ENCODE measurements at regions of chr1 and their contacts with region 1.

Region 1: DNA sequence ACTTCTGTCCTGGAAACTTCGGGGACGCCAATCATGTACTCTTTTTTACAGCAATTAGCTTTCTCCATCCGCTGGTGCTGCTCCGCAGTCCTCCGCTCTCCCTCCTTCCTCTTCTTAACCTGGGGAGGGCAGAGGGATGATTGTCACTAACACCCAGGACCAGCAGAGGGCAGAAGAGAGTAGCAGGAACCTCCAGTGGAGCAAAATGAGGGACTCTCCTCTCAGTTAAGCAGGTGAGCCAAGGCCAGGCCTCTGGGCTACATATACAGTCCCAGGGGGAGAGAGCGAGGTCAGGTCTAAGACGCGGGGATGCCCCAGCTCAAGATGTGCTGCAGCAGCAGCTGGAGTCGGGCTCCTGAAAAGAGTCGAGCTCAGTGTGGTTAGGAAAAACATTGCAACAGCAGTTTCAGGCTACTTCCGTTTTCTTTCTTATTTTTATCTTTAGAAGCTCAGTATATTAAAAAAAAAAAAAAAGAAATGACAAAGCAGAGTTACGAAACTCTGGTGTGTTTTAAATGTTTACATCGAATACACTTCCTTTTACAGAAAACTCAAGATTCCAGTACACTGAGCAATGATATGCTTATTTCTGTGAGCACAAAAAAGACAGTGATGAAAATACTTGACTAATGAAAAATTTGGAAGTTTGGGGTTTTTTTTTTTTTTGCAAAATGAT is 25.7 kb upstream of the NLRP3 start:
- DNase-seq: peak; percentile 73 to 93 (median 81)
- ATAC-seq: peak; percentile 92
- H3K4me3 ChIP-seq: peak overlapping the region; percentile 32
- H3K4me3 Mint-ChIP-seq: peak overlapping the region; percentile 54
- H3K27ac ChIP-seq: peak overlapping the region in 1 of 2 donors; percentile 36
- H3K27ac Mint-ChIP-seq: peak overlapping the region; percentile 65
- H3K4me1 ChIP-seq: peaks cover 16% of the 10 kb centered on the region
- H3K4me1 Mint-ChIP-seq: peaks cover 12% of the 10 kb centered on the region
- H3K27me3 ChIP-seq: no peaks in the 10 kb centered on the region
- H3K27me3 Mint-ChIP-seq: no peaks in the 10 kb centered on the region
- CTCF ChIP-seq: peak; percentile 83

Region 2: GRCh38 chr1:247146671-247147070 is 243.6 kb before region 1 on chr1:
- CTCF ChIA-PET with region 1: no interaction called
- POLR2A ChIA-PET with region 1: no interaction called
- intact Hi-C with region 1: no loop called
- DNase-seq: no peak
- ATAC-seq: no peak
- H3K4me3 ChIP-seq: no peak overlapping the region
- H3K4me3 Mint-ChIP-seq: no peak overlapping the region
- H3K27ac ChIP-seq: no peak overlapping the region
- H3K27ac Mint-ChIP-seq: no peak overlapping the region
- H3K4me1 ChIP-seq: no peaks in the 10 kb centered on the region
- H3K4me1 Mint-ChIP-seq: no peaks in the 10 kb centered on the region
- H3K27me3 ChIP-seq: no peaks in the 10 kb centered on the region
- H3K27me3 Mint-ChIP-seq: no peaks in the 10 kb centered on the region
- CTCF ChIP-seq: no peak

Region 3: GRCh38 chr1:247373721-247374141 is 16.5 kb before region 1 on chr1:
- CTCF ChIA-PET with region 1: interaction called, 29 read pairs
- POLR2A ChIA-PET with region 1: interaction called, 5 read pairs
- intact Hi-C with region 1: no loop called
- DNase-seq: peak; percentile 25 to 77 (median 50)
- ATAC-seq: peak; percentile 87
- H3K4me3 ChIP-seq: peak overlapping the region; percentile 14
- H3K4me3 Mint-ChIP-seq: no peak overlapping the region
- H3K27ac ChIP-seq: no peak overlapping the region
- H3K27ac Mint-ChIP-seq: no peak overlapping the region
- H3K4me1 ChIP-seq: peaks cover 7% of the 10 kb centered on the region
- H3K4me1 Mint-ChIP-seq: peaks cover 9% of the 10 kb centered on the region
- H3K27me3 ChIP-seq: no peaks in the 10 kb centered on the region
- H3K27me3 Mint-ChIP-seq: peaks cover 16% of the 10 kb centered on the region
- CTCF ChIP-seq: peak; percentile 64

Region 4: DNA sequence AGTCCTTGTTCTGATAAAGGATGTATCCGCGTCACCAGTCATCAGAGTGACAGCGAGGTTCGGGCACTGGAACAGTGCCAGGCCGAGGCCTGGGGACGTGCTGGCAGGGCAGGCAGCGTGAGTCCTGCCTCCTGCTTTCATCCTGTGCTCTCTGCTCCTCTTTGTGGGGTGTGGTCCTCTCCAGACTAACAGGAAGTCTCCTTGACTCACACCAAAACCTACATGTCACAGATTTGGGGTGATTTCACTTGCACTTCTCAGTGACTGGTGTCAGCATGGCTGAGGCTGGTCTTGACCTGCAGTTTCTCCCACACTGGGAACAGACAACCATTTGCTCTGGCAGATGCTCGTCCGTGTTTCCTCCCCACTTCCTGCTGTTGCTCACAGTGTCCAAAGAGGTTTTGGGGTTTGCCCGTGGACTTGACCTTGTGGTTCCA is 16.9 kb after region 1 on chr1:
- CTCF ChIA-PET with region 1: no interaction called
- POLR2A ChIA-PET with region 1: interaction called, 4 read pairs
- intact Hi-C with region 1: loop called in 1 of 2 experiments (anchors 2 kb)
- DNase-seq: peak; percentile 32 to 90 (median 73)
- ATAC-seq: peak; percentile 92
- H3K4me3 ChIP-seq: peak overlapping the region; percentile 40
- H3K4me3 Mint-ChIP-seq: peak overlapping the region; percentile 84
- H3K27ac ChIP-seq: peak overlapping the region; percentile 62 to 73
- H3K27ac Mint-ChIP-seq: peak overlapping the region; percentile 81
- H3K4me1 ChIP-seq: peaks cover 43% of the 10 kb centered on the region
- H3K4me1 Mint-ChIP-seq: peaks cover 40% of the 10 kb centered on the region
- H3K27me3 ChIP-seq: no peaks in the 10 kb centered on the region
- H3K27me3 Mint-ChIP-seq: no peaks in the 10 kb centered on the region
- CTCF ChIP-seq: no peak

Region 5: DNA sequence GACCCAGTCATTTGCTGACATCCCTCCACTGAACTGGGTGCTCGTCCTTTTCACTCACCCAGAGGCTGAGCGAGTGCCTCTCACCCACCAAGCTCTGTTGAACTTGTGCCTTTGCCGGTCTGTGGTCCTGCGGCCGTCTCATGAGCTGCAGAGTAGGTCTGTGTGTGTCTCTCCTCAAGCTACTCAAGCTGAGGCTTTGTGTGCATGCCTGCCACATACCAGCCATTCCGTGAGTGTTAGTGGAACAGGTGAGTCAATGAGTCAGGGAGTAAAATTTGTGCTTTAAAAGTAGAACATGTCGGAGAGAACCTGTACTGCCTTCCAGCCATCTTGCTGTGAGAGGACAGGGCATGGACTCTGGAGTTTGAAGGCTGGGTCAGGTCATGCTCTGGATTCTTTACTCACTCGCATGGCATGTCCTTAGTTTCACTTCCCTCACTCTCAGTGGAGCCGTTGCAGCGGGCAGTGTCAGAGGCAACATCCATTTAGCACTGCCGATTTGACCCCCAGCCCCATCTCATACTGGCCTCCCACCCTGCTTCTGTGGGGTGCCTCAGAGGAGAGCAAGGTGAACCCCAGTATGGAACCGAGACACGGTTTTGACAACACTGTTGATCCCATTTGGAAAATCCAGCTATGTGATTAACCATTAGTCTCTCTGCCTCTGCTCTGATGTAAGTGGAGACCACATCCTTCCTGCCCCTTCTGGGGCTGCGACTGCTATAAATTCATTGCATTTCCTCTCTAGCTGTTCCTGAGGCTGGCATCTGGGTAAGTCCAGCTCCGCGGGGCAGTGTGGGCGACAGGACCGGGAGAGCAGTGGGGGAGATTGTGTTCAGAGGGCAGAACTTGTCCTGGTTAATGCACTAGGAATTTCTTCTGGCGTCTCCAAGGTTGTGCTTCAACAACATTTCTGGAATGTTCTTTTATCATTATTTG is 25.4 kb after region 1 on chr1 and contains the start of gene NLRP3:
- CTCF ChIA-PET with region 1: interaction called, 9 read pairs
- POLR2A ChIA-PET with region 1: interaction called, 19 read pairs
- intact Hi-C with region 1: loop called in 1 of 2 experiments (anchors 1 kb)
- DNase-seq: peak in 13 of 14 experiments; percentile 14 to 83 (median 32)
- ATAC-seq: peak; percentile 88
- H3K4me3 ChIP-seq: peak within 1 kb of the TSS; percentile 69
- H3K4me3 Mint-ChIP-seq: peak within 1 kb of the TSS; percentile 89
- H3K27ac ChIP-seq: peak within 1 kb of the TSS in 1 of 2 donors; percentile 45
- H3K27ac Mint-ChIP-seq: peak within 1 kb of the TSS; percentile 78
- H3K4me1 ChIP-seq: peaks cover 37% of the 10 kb centered on the region
- H3K4me1 Mint-ChIP-seq: peaks cover 48% of the 10 kb centered on the region
- H3K27me3 ChIP-seq: no peaks in the 10 kb centered on the region
- H3K27me3 Mint-ChIP-seq: no peaks in the 10 kb centered on the region
- CTCF ChIP-seq: no peak
- total RNA-seq, gene NLRP3: 7.8 to 8.5 TPM

Region 6: DNA sequence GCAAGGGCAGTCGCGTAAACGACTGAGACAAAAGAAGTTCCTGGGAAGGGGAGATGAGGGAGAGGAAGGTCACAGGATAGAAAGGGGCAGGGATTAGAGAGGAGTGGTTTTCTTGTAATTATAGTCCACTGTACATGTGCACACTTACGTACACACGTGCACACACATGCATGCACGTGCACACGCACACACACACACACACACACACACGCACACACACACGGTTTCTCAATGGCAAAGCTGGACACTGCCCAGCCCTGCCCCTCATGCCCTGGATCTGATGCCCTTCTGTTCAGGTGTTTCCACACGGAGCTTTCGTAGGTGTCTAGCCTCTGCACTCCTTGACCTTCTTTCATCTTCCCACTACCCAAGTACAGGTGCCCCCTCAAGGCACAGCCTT is 63.7 kb after region 1 on chr1:
- CTCF ChIA-PET with region 1: no interaction called
- POLR2A ChIA-PET with region 1: no interaction called
- intact Hi-C with region 1: no loop called
- DNase-seq: no peak
- ATAC-seq: no peak
- H3K4me3 ChIP-seq: no peak overlapping the region
- H3K4me3 Mint-ChIP-seq: no peak overlapping the region
- H3K27ac ChIP-seq: no peak overlapping the region
- H3K27ac Mint-ChIP-seq: no peak overlapping the region
- H3K4me1 ChIP-seq: peaks cover 5% of the 10 kb centered on the region
- H3K4me1 Mint-ChIP-seq: peaks cover 7% of the 10 kb centered on the region
- H3K27me3 ChIP-seq: no peaks in the 10 kb centered on the region
- H3K27me3 Mint-ChIP-seq: no peaks in the 10 kb centered on the region
- CTCF ChIP-seq: no peak

Region 7: GRCh38 chr1:247487057-247487456 is 96.8 kb after region 1 on chr1:
- CTCF ChIA-PET with region 1: interaction called, 47 read pairs
- POLR2A ChIA-PET with region 1: interaction called, 5 read pairs
- intact Hi-C with region 1: loop called (anchors 1 kb)
- DNase-seq: peak in 10 of 14 experiments; percentile 2 to 76 (median 14)
- ATAC-seq: peak; percentile 77
- H3K4me3 ChIP-seq: no peak overlapping the region
- H3K4me3 Mint-ChIP-seq: no peak overlapping the region
- H3K27ac ChIP-seq: no peak overlapping the region
- H3K27ac Mint-ChIP-seq: no peak overlapping the region
- H3K4me1 ChIP-seq: no peaks in the 10 kb centered on the region
- H3K4me1 Mint-ChIP-seq: no peaks in the 10 kb centered on the region
- H3K27me3 ChIP-seq: peaks cover 0 to 5% of the 10 kb centered on the region in 2 experiments
- H3K27me3 Mint-ChIP-seq: peaks cover 10% of the 10 kb centered on the region
- CTCF ChIP-seq: peak; percentile 76

Region 8: DNA sequence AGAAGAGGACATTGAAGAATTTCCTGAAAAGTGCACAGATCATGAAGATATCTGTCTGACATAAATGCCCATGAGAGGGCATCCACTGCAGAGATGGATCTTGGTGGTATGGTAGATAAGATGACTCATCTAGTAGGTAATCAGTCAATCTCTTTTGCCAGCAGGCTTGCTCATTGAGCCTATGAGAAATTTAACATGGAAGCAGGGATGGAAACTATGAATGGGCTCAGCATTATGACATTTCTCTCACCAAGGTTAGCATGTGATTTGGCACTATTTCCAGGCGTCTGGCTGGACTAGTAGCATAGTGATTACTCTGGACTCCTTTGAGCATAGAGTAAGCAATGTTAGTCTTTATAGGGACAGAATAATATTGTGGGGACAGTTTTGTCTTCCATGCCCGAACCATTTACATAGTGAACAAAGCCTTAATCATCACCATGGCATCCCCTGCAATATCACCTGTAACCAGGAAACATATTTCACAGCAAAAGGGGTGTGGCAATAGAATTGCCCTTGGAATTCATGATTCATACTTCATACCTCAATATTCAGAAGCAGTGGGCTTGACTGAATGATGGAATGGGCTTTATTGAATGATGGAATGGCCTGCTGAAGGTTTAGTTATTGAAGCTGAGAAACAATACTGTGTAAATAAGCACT is 138.7 kb after region 1 on chr1:
- CTCF ChIA-PET with region 1: no interaction called
- POLR2A ChIA-PET with region 1: no interaction called
- intact Hi-C with region 1: no loop called
- DNase-seq: no peak
- ATAC-seq: no peak
- H3K4me3 ChIP-seq: no peak overlapping the region
- H3K4me3 Mint-ChIP-seq: no peak overlapping the region
- H3K27ac ChIP-seq: no peak overlapping the region
- H3K27ac Mint-ChIP-seq: no peak overlapping the region
- H3K4me1 ChIP-seq: no peaks in the 10 kb centered on the region
- H3K4me1 Mint-ChIP-seq: no peaks in the 10 kb centered on the region
- H3K27me3 ChIP-seq: peaks cover 0 to 9% of the 10 kb centered on the region in 2 experiments
- H3K27me3 Mint-ChIP-seq: peaks cover 55% of the 10 kb centered on the region
- CTCF ChIP-seq: no peak

Region 9: DNA sequence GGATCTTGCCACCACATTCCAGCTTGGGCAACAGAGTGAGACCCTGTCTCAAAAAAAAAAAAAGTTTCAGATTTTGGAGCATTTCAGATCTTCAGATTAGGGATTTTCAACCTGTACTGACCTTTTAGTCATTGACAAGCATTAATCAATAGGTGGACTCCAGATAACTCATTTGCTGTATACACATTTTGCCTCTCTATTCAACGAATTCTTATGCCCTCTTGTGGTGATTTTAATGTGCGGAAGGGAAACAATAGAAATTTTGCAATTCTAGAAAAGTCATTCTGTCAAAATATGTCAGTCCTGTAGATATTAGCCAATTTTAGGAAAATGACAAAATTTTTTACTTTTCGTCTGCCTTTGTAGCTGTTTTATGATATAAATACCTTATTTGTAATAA is 186.2 kb after region 1 on chr1:
- CTCF ChIA-PET with region 1: no interaction called
- POLR2A ChIA-PET with region 1: no interaction called
- intact Hi-C with region 1: loop called (anchors 5 kb)
- DNase-seq: peak in 2 of 14 experiments; percentile 12 to 18
- ATAC-seq: no peak
- H3K4me3 ChIP-seq: no peak overlapping the region
- H3K4me3 Mint-ChIP-seq: no peak overlapping the region
- H3K27ac ChIP-seq: no peak overlapping the region
- H3K27ac Mint-ChIP-seq: no peak overlapping the region
- H3K4me1 ChIP-seq: no peaks in the 10 kb centered on the region
- H3K4me1 Mint-ChIP-seq: no peaks in the 10 kb centered on the region
- H3K27me3 ChIP-seq: peaks cover 0 to 2% of the 10 kb centered on the region in 2 experiments
- H3K27me3 Mint-ChIP-seq: peaks cover 16% of the 10 kb centered on the region
- CTCF ChIP-seq: no peak